ENCODE measurements at regions of chr11 and their contacts with region 1.

Region 1: DNA sequence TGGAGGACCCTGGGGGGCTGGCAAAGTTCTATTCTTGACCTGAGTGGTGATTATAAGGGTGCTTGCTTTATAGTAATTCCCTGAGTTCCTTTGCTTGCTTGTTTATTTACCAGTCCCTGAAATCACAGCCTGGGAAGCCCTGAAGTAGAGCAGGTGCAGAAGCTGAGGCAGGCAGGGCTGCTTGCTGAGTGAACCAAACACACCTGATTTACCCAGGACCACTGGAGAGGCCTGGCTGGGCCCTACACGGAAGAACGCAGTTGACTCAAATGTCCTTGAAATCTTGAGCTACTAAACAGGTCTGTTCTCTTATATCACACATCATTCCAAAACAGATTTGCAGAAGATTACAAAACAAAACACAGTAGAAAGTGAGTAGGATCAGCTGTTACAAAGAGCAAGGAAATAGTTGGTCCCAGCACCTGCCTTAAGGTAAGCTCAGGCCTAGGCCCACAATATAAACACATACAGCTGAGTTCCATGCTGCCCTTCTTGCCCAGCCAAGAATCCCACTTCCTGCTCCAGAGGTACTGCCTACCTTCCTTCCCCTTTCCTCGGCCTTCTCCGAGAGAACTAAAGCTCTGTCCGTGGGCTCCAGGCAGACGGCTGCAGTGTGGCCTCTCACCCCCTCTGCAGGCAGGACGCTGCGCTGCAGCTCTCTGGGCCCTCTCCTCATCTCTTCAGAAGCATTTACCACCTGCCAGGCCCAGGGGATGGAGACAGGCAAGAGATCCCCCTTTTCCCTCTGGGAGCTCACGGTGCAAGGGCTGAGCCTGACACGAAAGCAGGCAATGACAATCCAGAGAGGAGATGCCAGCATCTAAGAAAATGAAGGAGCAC is 46.1 kb upstream of the SCUBE2 start:
- DNase-seq: peak; percentile 85
- H3K4me3 ChIP-seq: no peak overlapping the region
- H3K27ac ChIP-seq: peak overlapping the region; percentile 75
- H3K4me1 ChIP-seq: peaks cover 37% of the 10 kb centered on the region
- H3K27me3 ChIP-seq: no peaks in the 10 kb centered on the region
- CTCF ChIP-seq: peak; percentile 90 to 99
- POLR2A ChIP-seq: no peak

Region 2: DNA sequence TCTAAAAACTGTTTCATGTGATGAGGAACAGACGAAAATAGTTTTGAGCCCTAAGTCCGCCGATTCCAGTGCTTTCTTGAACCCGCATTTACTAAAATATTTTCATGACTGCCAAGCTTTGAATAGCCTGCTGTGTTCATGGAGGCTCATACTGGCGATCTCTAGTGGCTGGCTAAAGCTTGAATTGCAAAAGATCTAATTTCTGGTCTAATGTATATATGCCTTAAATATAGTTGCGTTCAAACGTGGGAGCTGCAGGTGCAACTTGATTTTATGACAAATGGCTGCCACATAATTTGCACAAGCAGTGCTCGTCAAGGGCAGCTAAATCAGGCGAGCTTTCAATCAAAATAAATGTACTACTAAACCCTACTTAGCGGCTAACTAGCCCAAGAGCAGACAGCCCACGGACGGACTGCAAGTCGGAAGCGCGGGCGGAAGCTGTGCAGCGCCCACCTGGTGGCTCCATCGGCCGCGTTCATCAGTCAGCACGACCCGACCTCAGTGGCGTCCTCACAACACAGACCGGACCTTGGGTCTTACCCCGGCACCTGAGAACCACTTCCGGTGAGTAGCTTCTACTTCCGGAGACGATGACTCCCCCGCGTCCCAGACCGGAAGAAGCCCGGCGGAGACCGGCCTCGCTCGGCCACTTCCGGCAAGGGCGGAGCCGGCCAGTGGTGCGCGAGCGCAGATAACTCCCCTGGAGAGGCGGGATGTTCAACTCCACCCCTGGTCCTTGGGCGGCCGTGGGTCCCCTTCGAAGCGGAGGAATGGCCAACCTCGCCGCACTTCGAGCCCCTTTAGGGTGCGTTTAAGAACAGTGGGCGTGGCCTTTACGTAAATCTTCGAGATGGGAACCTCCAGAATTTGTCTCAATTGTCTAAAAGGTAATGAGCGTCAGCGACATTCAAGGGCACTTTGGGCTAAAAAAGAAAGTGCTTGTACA is 448.8 kb before region 1 on chr11:
- CTCF ChIA-PET with region 1: no interaction called
- POLR2A ChIA-PET with region 1: no interaction called
- dilution Hi-C with region 1: no loop called
- intact Hi-C with region 1: loop called (anchors 1 kb)
- DNase-seq: peak; percentile 93
- H3K4me3 ChIP-seq: peak overlapping the region; percentile 45 to 86 (median 53)
- H3K27ac ChIP-seq: peak overlapping the region; percentile 65
- H3K4me1 ChIP-seq: peaks cover 46% of the 10 kb centered on the region
- H3K27me3 ChIP-seq: no peaks in the 10 kb centered on the region
- CTCF ChIP-seq: no peak
- POLR2A ChIP-seq: peak; percentile 99

Region 3: DNA sequence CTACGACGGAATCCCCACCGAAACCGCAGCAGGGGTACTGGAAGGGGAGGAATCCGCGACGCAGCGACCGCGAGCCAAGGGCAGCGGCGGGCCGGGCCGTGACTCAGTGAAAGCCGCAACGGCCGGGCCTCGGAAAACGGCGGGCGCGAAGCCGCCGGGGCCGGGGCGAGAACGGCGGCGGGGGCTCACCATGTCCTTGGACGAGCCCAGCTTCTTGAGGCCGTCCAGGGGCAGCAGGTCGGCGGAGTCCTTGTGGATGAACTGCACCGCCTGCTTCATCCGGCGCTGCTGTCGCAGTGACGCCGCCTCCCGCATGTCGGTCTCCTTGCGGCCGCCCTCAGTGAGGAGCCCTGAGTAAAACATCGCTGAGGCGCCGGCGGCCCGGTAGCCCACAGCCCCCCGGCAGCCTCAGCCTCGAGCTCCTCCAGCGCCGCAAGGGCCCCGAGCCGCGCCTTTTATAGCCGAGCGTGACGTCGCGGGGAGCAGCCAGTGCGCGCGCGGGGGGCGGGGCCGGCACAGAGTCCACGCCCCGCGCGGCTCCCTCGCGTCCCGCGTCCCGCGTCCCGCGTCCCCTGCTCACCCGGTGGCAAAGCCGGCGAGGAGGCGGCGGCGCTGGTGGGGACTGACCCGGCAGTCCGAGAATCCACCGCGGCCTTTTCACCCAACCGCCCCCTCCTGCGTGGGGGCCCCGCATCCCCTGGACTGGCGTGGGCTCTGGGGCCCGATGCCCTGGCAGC is 133.8 kb before region 1 on chr11 and contains the start of gene NRIP3:
- CTCF ChIA-PET with region 1: interaction called, 7 read pairs
- POLR2A ChIA-PET with region 1: no interaction called
- dilution Hi-C with region 1: no loop called
- intact Hi-C with region 1: loop called (anchors 5 kb)
- DNase-seq: peak; percentile 58
- H3K4me3 ChIP-seq: peak within 1 kb of the TSS; percentile 18 to 57 (median 33)
- H3K27ac ChIP-seq: peak within 1 kb of the TSS; percentile 17
- H3K4me1 ChIP-seq: peaks cover 26% of the 10 kb centered on the region
- H3K27me3 ChIP-seq: peaks cover 23 to 28% of the 10 kb centered on the region in 2 experiments
- CTCF ChIP-seq: no peak
- POLR2A ChIP-seq: peak; percentile 67
- total RNA-seq, gene NRIP3: 8.4 and 9.9 TPM in 2 replicates

Region 4: DNA sequence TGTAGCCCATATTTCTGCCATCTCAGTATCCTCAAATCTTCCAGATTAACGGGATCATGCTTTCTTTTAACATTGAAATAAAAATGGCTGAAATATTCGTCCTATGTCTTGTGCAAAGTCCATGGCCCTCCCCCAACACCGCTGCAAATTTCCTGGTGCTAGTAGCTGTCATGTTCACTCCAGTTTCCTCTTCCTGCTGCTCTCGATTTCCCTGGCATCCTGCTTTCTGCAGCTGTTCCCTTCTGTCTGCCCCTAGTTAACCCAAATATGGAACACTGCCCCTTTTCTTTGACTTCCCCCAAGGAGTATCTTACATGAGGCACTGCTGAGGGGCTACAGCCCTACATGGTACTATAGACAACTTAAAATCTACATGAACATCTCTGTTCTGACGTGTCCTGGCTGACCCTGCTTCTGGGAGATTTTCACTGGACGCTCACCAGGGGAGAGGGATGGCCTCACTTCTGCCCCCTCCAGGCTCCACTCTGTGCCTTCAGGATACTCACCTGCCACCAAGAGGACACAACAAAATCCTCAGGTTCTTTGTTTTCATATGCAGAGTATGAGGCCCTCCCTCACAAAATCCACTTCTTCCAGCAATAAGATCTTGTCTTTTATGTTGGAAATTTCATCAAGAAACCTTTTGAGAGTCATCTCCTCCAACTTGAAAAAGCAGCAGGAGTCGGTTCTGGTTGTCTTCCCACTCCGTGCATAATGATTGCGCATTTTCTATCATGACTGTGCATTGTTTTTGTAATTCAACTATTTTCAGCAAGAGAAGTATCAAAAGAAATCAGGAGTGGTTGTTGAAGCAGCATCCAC is 16.6 kb before region 1 on chr11:
- CTCF ChIA-PET with region 1: interaction called, 11 read pairs
- POLR2A ChIA-PET with region 1: no interaction called
- dilution Hi-C with region 1: no loop called
- intact Hi-C with region 1: no loop called
- DNase-seq: no peak
- H3K4me3 ChIP-seq: no peak overlapping the region
- H3K27ac ChIP-seq: no peak overlapping the region
- H3K4me1 ChIP-seq: no peaks in the 10 kb centered on the region
- H3K27me3 ChIP-seq: no peaks in the 10 kb centered on the region
- CTCF ChIP-seq: peak in 1 of 2 donors; percentile 8
- POLR2A ChIP-seq: no peak

Region 5: DNA sequence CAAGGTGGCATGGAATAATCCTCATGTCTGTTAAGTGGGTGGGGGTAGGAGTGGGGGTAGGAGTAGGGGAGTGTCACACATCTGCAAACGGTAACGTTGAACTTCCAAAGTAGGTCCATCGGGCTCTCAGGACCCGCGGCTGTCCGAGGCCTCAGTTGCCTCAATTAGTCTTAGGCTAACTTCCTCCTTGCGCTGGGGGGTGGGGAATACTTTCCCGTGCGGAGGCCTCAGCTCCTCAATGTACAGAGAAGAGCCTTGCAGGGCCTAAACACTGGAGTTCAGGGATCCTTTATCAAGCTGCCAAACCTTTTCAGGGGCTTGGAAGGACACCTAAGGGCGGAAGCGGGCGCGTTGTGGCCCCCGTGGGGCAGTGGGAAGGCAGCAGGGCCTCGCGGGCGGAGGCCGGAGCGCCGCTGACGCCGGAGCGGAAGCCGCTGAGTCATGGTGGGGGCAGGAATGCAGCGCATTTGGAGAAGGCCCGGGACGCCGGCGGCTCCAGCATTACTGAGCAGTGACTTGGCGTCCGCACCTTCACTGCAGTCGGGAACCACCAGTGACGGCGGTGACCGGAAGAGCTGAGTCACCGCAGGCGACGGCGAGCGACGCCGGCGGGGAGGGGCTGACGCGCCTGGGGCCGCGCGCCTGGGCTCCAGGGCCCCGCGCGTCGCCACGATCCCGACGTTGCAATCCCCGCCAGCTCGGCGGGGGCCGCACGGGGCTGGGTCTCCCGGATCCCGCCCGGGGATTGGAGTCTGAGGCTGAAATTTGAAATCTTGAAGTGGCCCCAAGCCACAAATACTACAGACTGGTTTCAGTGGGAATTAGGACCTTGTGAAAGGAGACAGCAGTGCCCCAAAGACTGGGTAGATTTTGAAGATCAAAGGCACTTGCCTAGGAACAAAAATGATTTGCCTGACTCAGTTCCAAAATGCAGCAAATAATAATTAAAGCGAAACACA is 226.7 kb after region 1 on chr11:
- CTCF ChIA-PET with region 1: no interaction called
- POLR2A ChIA-PET with region 1: no interaction called
- dilution Hi-C with region 1: no loop called
- intact Hi-C with region 1: loop called (anchors 1 kb)
- DNase-seq: peak; percentile 96
- H3K4me3 ChIP-seq: peak overlapping the region in 2 of 3 experiments; percentile 23 to 46
- H3K27ac ChIP-seq: peak overlapping the region; percentile 92
- H3K4me1 ChIP-seq: peaks cover 17% of the 10 kb centered on the region
- H3K27me3 ChIP-seq: no peaks in the 10 kb centered on the region
- CTCF ChIP-seq: no peak
- POLR2A ChIP-seq: peak; percentile 67

Measured in endothelial cell of umbilical vein (primary cell).